Psoas muscle (tissue), 8 donors: ENCODE measurements at regions of chr1 and their contacts with region 1.

Region 1: DNA sequence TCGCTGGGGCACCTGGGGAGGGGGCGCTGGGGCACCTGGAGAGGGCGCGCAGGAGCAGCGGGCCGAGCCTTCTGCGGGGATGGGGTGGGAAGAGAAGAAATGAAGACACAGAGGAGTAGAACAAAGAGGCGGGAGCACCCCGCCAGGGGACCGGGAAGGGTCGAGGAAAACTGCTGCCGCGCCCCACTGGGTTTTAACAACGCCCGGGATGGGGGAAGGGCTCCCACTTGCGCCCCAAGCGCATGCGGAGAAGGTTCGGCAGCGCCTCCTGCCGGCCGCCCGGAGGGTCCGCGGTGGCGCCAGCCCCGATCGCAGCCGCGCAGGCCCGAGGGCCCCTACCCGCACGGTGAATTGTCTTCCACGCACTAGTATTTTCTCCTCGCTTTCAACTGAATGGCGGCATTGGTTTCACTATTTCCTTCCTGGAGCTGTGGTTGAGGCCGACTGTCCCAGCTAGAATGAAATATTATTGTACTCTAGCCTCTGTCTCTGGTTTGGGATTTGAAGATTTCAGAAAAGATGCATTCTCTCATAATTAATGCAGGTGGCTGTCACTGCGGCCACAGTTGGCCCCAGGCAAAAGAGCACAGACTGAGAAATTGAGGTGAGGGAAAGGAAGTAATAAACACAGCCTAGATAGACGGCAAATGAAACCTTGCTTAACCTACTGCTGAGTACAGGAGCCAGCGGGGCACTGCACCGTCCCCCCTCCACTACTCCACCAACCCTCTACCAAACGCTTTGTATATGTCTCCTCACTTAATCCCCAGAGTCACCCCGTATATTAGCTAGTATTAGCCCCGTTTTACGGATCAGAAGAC is 57.3 kb downstream of the MAB21L3 start:
- DNase-seq: peak; percentile 87 to 92
- ATAC-seq: peak; percentile 88 to 95 (median 90)
- H3K4me3 ChIP-seq: peak overlapping the region; percentile 73
- H3K27ac ChIP-seq: peak overlapping the region; percentile 23
- H3K4me1 ChIP-seq: no peaks in the 10 kb centered on the region
- H3K27me3 ChIP-seq: peaks cover 0 to 7% (median 0%) of the 10 kb centered on the region in 3 donors
- CTCF ChIP-seq: peak; percentile 87

Region 2: DNA sequence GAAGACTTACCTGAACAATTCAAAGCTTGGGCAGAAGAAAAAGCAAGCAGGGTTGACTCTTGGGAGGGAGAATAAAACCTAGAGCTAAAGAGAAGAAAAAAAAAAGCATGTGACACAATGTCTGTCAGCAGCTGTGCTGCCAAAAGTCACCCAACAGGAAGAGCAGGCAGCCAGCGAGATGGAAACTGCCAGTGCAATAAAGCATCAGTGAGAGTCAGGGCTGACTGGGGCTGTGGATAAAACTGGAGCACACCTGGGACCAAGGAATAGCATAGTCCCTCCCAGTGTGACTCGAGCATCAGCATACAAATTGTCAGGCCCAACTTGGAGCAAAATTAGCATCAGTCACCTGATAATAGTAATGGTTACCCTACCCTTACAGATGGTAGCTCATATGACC is 257.2 kb before region 1 on chr1:
- intact Hi-C with region 1: no loop called
- DNase-seq: no peak
- ATAC-seq: no peak
- H3K4me3 ChIP-seq: no peak overlapping the region
- H3K27ac ChIP-seq: no peak overlapping the region
- H3K4me1 ChIP-seq: no peaks in the 10 kb centered on the region
- H3K27me3 ChIP-seq: no peaks in the 10 kb centered on the region
- CTCF ChIP-seq: no peak

Region 3: DNA sequence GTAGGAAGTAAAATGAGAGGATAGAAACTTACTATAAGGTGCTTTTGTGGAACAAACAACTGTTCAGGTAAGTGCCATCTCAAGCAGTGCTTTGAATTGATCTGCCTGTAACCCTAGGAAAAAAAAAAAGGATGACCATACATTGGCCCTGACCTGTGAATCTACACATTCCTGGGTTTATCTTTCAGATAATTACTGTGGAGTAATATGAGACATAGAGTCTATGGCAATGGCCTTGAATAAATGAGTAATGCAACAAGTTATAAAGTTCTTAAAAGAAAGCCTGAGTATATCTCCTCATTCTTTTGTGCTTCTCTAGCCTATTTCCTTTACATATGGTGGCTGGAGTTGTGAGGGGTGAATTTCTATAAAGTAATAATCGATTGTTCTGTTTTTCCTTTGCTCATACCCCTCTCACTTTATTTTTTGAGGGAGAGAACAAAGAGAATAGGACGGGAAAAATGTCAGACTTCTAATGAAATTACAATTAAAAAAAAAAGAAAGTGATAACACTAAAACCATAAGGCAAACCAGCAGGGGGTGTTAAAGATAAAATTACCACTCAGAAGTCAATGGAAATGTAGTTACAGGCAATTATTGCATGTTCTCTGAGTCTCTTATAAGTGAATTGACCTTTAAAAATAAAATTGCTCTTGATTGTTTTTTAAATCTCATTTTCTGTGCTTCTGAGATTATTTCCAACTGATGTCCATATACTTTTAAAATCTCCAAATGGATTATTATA is 192.1 kb after region 1 on chr1:
- intact Hi-C with region 1: loop called in 1 of 2 experiments (anchors 5 kb)
- DNase-seq: no peak
- ATAC-seq: peak in 1 of 4 donors; percentile 51
- H3K4me3 ChIP-seq: no peak overlapping the region
- H3K27ac ChIP-seq: no peak overlapping the region
- H3K4me1 ChIP-seq: peaks cover 4% of the 10 kb centered on the region
- H3K27me3 ChIP-seq: no peaks in the 10 kb centered on the region
- CTCF ChIP-seq: peak; percentile 39